Activated T-helper 2 cell treated with anti-CD3 and anti-CD28 coated beads, Interferon-gamma antibody, Interleukin-2, Interleukin-4, amounts not matched to agents 10 μg/mL and 5 μg/mL and 100 μg/mL, durations not matched to agents 14 hours and 24 hours and 36 hours (primary cell): ENCODE measurements at regions of chr17 and their contacts with region 1.

Region 1: DNA sequence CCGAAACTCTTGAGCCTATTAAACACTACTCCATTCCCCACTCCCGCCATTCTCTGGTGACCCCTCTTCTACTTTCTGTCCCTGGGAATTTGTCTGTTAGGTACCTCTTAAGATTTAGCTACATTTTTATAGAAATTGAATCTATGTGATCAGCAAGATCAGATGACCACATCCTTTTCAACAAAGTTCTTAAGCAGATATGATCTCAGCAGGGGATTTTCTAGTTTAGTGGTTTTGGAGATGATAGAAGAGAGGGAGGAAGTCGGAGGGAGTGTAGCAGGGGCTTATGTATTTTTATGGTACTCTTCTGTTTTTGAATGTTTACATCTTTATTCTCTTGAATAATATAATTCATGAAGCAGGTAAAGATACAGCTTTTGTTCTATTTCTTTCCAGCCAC is 40.8 kb downstream of the RPA1 start:
- DNase-seq: peak; percentile 13
- H3K4me3 Mint-ChIP-seq: peak overlapping the region; percentile 64
- H3K27ac Mint-ChIP-seq: peak overlapping the region; percentile 83
- H3K4me1 Mint-ChIP-seq: peaks cover 64% of the 10 kb centered on the region
- H3K27me3 Mint-ChIP-seq: no peaks in the 10 kb centered on the region

Region 2: DNA sequence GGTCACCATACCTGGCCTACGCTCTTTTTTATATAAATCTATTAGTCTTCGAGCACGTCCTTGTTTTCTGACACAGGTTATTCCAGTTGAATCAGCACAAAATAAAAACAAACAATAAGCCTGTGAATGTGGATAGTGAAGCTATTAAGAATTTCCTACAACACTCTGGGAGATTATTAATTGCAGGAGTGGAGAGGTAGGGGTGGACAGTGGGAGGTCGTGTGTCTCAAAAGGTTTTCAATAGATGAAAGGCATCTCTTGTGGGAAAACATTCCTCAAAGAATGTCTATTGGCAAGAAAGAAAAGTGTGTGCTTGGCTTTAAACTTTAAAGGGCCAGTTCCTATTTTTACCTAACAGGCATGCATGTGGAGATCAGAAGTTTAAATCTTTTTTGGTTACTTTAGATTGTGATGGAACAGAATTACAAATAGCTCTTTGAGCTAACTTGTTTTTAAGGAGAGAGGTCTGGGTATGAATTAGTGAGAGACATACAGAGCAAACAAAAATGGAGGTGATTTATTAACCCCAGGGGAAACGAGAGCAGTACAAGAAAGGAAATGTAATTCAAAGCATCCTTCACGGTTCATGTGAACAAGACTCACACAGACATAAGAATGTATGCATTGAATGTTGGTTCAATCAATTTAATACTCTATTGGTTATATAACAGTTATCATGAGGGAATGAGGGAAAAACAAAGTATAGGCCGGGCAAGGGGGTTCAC is 49.9 kb before region 1 on chr17:
- intact Hi-C with region 1: loop called (anchors 2 kb)
- DNase-seq: no peak
- H3K4me3 Mint-ChIP-seq: no peak overlapping the region
- H3K27ac Mint-ChIP-seq: no peak overlapping the region
- H3K4me1 Mint-ChIP-seq: peaks cover 20% of the 10 kb centered on the region
- H3K27me3 Mint-ChIP-seq: no peaks in the 10 kb centered on the region

Region 3: DNA sequence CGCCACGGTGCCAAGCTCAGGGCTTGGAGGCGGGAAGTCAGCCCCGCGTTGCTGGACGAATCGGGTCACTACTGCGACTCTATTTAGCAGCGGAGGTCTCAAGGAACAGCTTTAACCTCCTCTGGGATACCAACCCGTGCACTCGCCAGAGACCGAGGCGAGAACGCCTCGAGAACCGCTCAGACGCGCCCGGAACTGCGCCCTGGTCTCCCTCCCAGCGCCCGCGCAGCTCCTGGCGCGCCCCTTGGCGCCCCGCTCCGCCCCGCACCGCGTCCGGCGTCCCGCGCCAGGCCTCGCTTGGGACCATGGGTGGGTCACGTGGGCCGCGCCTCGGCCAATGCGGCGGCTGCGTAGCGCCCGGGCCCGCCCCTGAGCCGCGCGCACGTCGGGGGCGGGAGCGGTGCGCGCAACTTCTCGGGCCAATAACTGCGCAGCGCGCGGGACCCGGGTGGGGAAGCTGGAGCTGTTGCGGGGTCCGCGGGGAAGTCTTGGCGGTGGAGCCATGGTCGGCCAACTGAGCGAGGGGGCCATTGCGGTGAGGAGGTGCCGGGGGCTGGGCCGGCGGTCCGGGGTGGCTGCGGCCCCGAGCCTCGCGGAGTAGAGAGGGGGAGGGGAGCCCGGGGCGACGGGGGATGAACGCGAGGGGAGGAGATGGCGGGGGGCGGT is 40.9 kb before region 1 on chr17 and contains the starts of genes RPA1 and SMYD4:
- intact Hi-C with region 1: loop called (anchors 1 kb)
- DNase-seq: peak; percentile 89
- H3K4me3 Mint-ChIP-seq: peak within 1 kb of the TSS; percentile 94
- H3K27ac Mint-ChIP-seq: peak within 1 kb of the TSS; percentile 86
- H3K4me1 Mint-ChIP-seq: peaks cover 48% of the 10 kb centered on the region
- H3K27me3 Mint-ChIP-seq: no peaks in the 10 kb centered on the region
- total RNA-seq, gene RPA1: 229 and 243 TPM in 2 replicates
- total RNA-seq, gene SMYD4: 26.9 and 31.0 TPM in 2 replicates

Region 4: DNA sequence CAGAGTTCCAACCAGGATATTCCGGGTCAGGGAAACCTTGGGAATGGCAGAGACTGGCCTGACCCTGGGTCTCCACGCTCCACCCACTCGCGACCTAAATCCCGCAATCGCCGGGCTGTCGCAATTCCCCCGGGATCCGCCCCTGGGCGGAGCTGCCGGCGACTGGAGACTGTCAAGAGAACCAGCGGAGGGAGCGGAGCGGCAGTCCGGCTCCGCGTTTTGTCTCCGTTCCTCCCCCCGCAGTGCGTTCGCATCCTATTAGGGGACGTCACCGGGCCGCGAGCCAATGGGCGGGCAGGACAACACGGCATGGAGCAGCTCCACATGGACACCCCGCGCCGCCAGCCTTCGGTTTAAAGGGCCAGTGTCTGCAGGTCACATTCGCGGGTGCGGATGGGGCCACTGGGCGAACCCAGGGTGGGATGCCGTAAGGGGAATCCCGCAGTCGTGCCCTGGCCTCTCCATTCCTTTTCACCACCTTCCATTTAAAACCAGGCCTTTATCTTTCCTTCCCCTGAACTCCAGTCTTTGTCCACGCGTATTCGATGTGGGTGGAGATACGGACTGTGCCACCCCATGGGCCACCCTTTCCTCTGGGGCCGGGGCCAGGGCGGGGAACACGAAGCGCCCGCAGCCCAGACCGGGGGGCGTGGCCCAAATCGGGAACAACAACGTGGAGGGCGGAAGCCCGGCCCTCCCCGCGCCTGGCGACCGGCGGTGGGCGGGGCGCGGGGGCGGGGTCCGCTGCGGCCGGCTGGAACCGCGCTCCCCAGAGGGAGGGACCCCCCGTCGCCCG is 531.0 kb after region 1 on chr17:
- intact Hi-C with region 1: loop called (anchors 5 kb)
- DNase-seq: peak; percentile 99
- H3K4me3 Mint-ChIP-seq: peak overlapping the region; percentile 89
- H3K27ac Mint-ChIP-seq: peak overlapping the region; percentile 97
- H3K4me1 Mint-ChIP-seq: peaks cover 44% of the 10 kb centered on the region
- H3K27me3 Mint-ChIP-seq: no peaks in the 10 kb centered on the region